Naive thymus-derived CD4-positive, alpha-beta T cell (primary cell): ENCODE measurements at regions of chr9 and their contacts with region 1.

Region 1: DNA sequence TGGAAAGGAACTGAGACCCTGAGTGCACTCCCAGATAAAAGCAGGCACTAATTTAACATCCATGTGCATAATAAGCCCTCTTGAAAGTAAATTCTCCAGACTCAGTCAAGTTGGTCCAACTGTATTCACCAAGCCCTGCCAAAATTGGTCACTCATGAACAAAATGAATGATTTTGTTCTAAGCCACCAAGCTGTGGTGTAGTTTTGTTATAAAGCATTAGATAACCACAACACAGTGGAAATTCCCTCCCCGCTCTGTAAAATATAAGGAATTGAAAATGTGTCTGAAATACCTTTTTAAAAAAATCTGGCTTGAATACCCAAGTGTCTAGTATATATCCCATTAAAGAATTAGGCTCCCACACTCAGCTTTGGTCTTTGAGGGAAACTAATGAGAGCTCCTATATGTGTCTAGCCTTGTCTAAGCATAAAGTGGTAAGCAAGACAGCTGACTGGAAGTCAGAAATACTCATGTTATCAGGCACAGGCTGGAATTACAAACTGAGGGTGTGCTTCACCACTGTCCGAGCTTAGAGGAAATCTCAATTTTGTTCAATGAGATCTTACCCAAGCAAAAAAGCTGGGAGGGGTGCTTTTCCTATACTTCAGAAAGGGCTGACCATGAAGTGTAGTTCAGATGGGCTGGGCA is 33.2 kb downstream of the IDNK start:
- DNase-seq: no peak
- ATAC-seq: no peak
- H3K4me3 ChIP-seq: no peak overlapping the region
- H3K4me3 Mint-ChIP-seq: no peak overlapping the region
- H3K27ac ChIP-seq: no peak overlapping the region
- H3K27ac Mint-ChIP-seq: peak overlapping the region in 1 of 9 donors; percentile 48
- H3K4me1 ChIP-seq: no peaks in the 10 kb centered on the region
- H3K4me1 Mint-ChIP-seq: peaks cover 0 to 2% (median 0%) of the 10 kb centered on the region in 7 donors
- H3K27me3 ChIP-seq: no peaks in the 10 kb centered on the region
- H3K27me3 Mint-ChIP-seq: no peaks in the 10 kb centered on the region

Region 2: DNA sequence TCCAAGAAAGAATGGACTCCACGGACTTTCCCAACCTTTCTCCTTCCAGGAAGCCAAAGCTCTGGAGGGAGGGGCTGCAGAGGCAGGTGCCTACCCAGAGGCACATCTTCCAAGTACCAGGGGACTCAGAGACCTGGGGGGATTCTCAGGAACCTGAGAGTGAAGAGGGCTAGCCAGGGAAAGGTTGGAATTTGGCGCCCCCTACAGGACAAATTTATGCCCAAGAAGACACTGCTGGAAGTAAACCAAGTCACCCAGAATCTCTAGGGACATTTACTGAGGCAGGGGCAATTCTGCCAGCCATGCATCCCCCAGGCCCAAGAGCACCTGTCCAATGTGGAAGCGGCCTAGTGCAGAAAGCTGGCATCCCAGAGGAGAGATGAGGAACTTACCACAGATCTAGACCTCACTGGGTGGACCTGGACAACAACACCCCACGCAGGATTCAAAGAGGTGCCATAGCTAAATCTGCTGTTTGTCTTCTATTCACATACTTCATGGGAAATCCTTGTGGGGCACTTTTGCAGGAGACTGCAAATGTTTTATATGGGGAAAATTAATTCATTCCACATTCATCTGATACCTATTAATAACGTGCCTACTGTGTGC is 59.2 kb before region 1 on chr9:
- CTCF ChIA-PET with region 1: no interaction called
- POLR2A ChIA-PET with region 1: no interaction called
- intact Hi-C with region 1: no loop called
- DNase-seq: peak in 4 of 9 donors; percentile 11 to 35 (median 14)
- ATAC-seq: no peak
- H3K4me3 ChIP-seq: no peak overlapping the region
- H3K4me3 Mint-ChIP-seq: no peak overlapping the region
- H3K27ac ChIP-seq: no peak overlapping the region
- H3K27ac Mint-ChIP-seq: no peak overlapping the region
- H3K4me1 ChIP-seq: no peaks in the 10 kb centered on the region
- H3K4me1 Mint-ChIP-seq: peaks cover 0 to 2% (median 0%) of the 10 kb centered on the region in 7 donors
- H3K27me3 ChIP-seq: no peaks in the 10 kb centered on the region
- H3K27me3 Mint-ChIP-seq: no peaks in the 10 kb centered on the region

Region 3: DNA sequence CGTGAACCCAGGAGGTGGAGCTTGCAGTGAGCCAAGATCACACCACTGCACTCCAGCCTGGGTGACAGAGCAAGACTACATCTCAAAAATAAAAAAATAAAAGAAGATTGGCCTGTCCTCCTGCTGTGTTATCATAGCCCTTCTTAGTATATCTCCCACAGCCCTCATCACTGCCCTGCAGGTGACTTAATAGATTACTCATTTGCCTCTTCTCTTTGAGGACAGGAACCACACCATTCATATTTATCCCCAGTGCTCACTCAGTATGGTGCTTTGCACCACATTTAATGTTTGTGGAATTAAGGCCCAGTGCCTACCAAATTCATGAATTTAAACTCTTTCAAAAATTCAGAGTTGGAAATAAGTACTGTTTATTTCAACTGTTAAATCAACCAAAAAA is 22.9 kb before region 1 on chr9:
- CTCF ChIA-PET with region 1: no interaction called
- POLR2A ChIA-PET with region 1: no interaction called
- intact Hi-C with region 1: no loop called
- DNase-seq: no peak
- ATAC-seq: no peak
- H3K4me3 ChIP-seq: no peak overlapping the region
- H3K4me3 Mint-ChIP-seq: no peak overlapping the region
- H3K27ac ChIP-seq: no peak overlapping the region
- H3K27ac Mint-ChIP-seq: no peak overlapping the region
- H3K4me1 ChIP-seq: no peaks in the 10 kb centered on the region
- H3K4me1 Mint-ChIP-seq: peaks cover 0 to 5% (median 3%) of the 10 kb centered on the region in 7 donors
- H3K27me3 ChIP-seq: no peaks in the 10 kb centered on the region
- H3K27me3 Mint-ChIP-seq: no peaks in the 10 kb centered on the region

Region 4: GRCh38 chr9:83675466-83675865 is 19.3 kb after region 1 on chr9:
- CTCF ChIA-PET with region 1: no interaction called
- POLR2A ChIA-PET with region 1: no interaction called
- intact Hi-C with region 1: loop called in 1 of 2 experiments (anchors 2 kb)
- DNase-seq: no peak
- ATAC-seq: no peak
- H3K4me3 ChIP-seq: no peak overlapping the region
- H3K4me3 Mint-ChIP-seq: no peak overlapping the region
- H3K27ac ChIP-seq: no peak overlapping the region
- H3K27ac Mint-ChIP-seq: peak overlapping the region in 3 of 9 donors; percentile 3 to 19 (median 19)
- H3K4me1 ChIP-seq: no peaks in the 10 kb centered on the region
- H3K4me1 Mint-ChIP-seq: peaks cover 0 to 19% (median 17%) of the 10 kb centered on the region in 7 donors
- H3K27me3 ChIP-seq: no peaks in the 10 kb centered on the region
- H3K27me3 Mint-ChIP-seq: no peaks in the 10 kb centered on the region